Heart right ventricle (tissue), 16 donors: ENCODE measurements at regions of chr3 and their contacts with region 1.

Region 1: GRCh38 chr3:157130467-157131251 is 29.3 kb downstream of the CCNL1 start:
- DNase-seq: peak; percentile 47 to 61
- ATAC-seq: peak; percentile 13 to 53 (median 42)
- H3K4me3 ChIP-seq: peak overlapping the region in 8 of 10 donors; percentile 0 to 49 (median 28)
- H3K27ac ChIP-seq: peak overlapping the region; percentile 65 to 90 (median 83)
- H3K4me1 ChIP-seq: peaks cover 0 to 82% (median 57%) of the 10 kb centered on the region in 9 donors
- H3K27me3 ChIP-seq: no peaks in the 10 kb centered on the region
- CTCF ChIP-seq: peak; percentile 50 to 80 (median 72)

Region 2: GRCh38 chr3:156547637-156548036 is 583.0 kb before region 1 on chr3:
- intact Hi-C with region 1: loop called in 5 of 10 experiments (anchors 5 to 10 kb)
- DNase-seq: no peak
- ATAC-seq: peak in 6 of 8 donors; percentile 57 to 78 (median 65)
- H3K4me3 ChIP-seq: no peak overlapping the region
- H3K27ac ChIP-seq: peak overlapping the region in 9 of 10 donors; percentile 38 to 91 (median 59)
- H3K4me1 ChIP-seq: peaks cover 5 to 99% (median 81%) of the 10 kb centered on the region in 9 donors
- H3K27me3 ChIP-seq: no peaks in the 10 kb centered on the region
- CTCF ChIP-seq: no peak

Region 3: GRCh38 chr3:156674046-156674910 is 456.4 kb before region 1 on chr3 and contains the start of gene TIPARP:
- intact Hi-C with region 1: loop called in 5 of 10 experiments (anchors 5 kb)
- DNase-seq: peak; percentile 99 to 100
- ATAC-seq: peak; percentile 96 to 99 (median 97)
- H3K4me3 ChIP-seq: peak within 1 kb of the TSS; percentile 72 to 98 (median 92)
- H3K27ac ChIP-seq: peak within 1 kb of the TSS; percentile 93 to 98 (median 97)
- H3K4me1 ChIP-seq: peaks cover 0 to 52% (median 35%) of the 10 kb centered on the region in 9 donors
- H3K27me3 ChIP-seq: no peaks in the 10 kb centered on the region
- CTCF ChIP-seq: peak; percentile 50 to 85 (median 72)
- total RNA-seq, gene TIPARP: 19.8 to 74.6 (median 23.9) TPM

Region 4: GRCh38 chr3:156691920-156692319 is 438.7 kb before region 1 on chr3:
- intact Hi-C with region 1: loop called in 1 of 10 experiments (anchors 10 kb)
- DNase-seq: no peak
- ATAC-seq: peak in 2 of 8 donors; percentile 29 to 48
- H3K4me3 ChIP-seq: peak overlapping the region in 3 of 10 donors; percentile 2 to 6 (median 4)
- H3K27ac ChIP-seq: peak overlapping the region in 3 of 10 donors; percentile 17 to 36 (median 33)
- H3K4me1 ChIP-seq: peaks cover 5 to 71% (median 57%) of the 10 kb centered on the region in 9 donors
- H3K27me3 ChIP-seq: no peaks in the 10 kb centered on the region
- CTCF ChIP-seq: no peak

Region 5: GRCh38 chr3:156826144-156826895 is 304.3 kb before region 1 on chr3 and contains the start of gene LEKR1:
- intact Hi-C with region 1: loop called in 6 of 10 experiments (anchors 5 to 10 kb)
- DNase-seq: peak; percentile 89 to 90
- ATAC-seq: peak; percentile 95 to 98 (median 97)
- H3K4me3 ChIP-seq: peak within 1 kb of the TSS; percentile 50 to 80 (median 71)
- H3K27ac ChIP-seq: peak within 1 kb of the TSS; percentile 85 to 95 (median 92)
- H3K4me1 ChIP-seq: peaks cover 0 to 13% (median 8%) of the 10 kb centered on the region in 9 donors
- H3K27me3 ChIP-seq: no peaks in the 10 kb centered on the region
- CTCF ChIP-seq: no peak
- total RNA-seq, gene LEKR1: 0.17 to 3.0 (median 0.92) TPM

Region 6: GRCh38 chr3:157081681-157082210 is 48.9 kb before region 1 on chr3:
- intact Hi-C with region 1: loop called in 4 of 10 experiments (anchors 2 to 5 kb)
- DNase-seq: peak; percentile 88 to 91
- ATAC-seq: peak; percentile 82 to 89 (median 85)
- H3K4me3 ChIP-seq: no peak overlapping the region
- H3K27ac ChIP-seq: peak overlapping the region in 4 of 10 donors; percentile 11 to 36 (median 26)
- H3K4me1 ChIP-seq: peaks cover 0 to 44% (median 22%) of the 10 kb centered on the region in 9 donors
- H3K27me3 ChIP-seq: no peaks in the 10 kb centered on the region
- CTCF ChIP-seq: peak in 8 of 9 donors; percentile 90 to 98 (median 96)

Region 7: DNA sequence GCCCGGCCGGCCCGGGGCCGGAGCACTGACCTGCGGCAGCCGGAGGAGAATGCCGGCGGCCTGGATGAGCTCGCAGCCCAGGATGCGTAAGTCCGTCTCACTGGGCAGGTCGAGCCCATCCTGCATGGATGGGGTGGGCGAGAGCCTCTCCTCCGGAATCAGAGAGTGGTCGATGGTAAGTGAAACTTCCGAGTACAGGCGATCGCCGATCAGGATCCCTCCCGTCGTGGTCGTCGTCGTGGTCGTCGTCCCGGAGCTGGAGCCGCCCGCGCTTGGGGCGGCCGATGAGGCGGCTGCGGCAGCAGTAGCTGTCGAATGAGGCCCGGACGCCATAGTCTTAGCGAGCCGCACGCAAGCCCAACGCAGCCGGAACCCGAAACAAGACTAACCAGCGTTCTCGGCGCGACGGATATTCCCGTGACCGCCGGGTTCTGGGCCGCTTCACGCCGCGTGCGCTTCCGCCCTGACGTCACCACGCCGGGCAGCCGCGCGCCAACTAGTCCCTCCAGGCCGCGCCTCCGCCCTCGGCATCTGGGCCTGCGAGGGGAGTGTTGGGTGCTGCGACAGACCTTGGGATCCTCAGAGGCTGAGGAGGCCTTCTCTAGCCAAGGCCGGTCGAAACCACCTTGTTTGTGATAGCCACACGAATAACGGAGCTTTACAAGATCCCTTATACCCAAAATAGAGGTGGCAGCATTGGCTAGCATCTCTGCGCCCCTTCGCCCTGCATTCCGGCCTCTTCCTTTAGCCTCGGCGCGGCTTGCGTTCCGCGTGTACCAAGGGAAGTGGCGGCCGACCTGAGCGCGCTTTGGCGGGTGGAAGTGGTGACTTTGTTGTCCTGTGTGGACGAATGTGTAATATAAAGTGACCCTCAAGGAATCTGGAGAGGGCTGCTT is 29.4 kb after region 1 on chr3 and contains the start of gene CCNL1:
- intact Hi-C with region 1: no loop called
- DNase-seq: peak; percentile 97
- ATAC-seq: peak; percentile 93 to 97 (median 96)
- H3K4me3 ChIP-seq: peak within 1 kb of the TSS; percentile 87 to 100 (median 96)
- H3K27ac ChIP-seq: peak within 1 kb of the TSS; percentile 97 to 100 (median 100)
- H3K4me1 ChIP-seq: peaks cover 9 to 61% (median 51%) of the 10 kb centered on the region in 9 donors
- H3K27me3 ChIP-seq: no peaks in the 10 kb centered on the region
- CTCF ChIP-seq: no peak
- total RNA-seq, gene CCNL1: 19.1 to 52.5 (median 24.7) TPM

Region 8: DNA sequence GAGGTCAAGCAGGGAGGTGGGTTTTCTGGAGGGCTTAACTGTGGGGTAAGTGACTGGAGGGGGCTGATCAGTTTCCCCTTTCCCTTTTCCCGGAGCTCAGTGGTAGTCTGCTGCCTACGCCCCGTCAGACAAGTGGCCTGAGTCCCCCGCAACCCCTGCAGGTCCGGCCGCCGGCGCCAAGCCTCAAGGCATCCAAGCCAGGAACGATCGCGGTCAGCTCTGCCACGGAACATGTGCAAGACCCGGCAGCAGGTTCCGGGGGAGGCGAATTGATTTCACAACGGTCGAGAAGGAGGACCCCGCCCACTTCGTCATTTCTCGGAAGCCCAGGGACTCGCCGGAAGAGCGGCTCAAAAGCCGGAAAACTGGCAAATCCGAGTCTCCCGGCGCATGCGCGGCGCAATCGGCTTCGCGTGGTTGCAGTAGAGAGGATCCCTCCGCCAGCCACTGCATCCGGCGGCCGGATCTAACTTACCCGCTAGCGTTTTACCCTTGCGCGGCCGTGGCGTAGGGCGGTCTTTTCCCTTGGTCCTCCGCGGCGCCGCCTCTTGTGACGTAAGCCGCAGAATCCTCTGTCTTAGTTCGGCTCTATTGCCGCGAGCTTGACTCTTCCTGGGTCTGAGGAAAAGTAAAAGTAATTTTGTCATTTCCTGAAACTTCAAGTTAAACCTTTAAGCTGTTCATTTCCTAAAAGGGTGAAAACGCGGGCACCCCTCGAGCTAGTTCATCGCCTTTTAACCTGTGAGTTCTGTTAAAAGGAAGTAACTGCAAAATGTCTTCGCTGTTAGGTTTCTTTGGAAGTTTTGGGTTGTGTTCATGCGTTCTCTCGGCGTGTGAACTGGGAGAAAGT is 44.2 kb after region 1 on chr3:
- intact Hi-C with region 1: no loop called
- DNase-seq: peak; percentile 98 to 100
- ATAC-seq: peak; percentile 97 to 99 (median 98)
- H3K4me3 ChIP-seq: peak overlapping the region; percentile 43 to 72 (median 64)
- H3K27ac ChIP-seq: peak overlapping the region; percentile 92 to 98 (median 96)
- H3K4me1 ChIP-seq: peaks cover 5 to 31% (median 22%) of the 10 kb centered on the region in 9 donors
- H3K27me3 ChIP-seq: no peaks in the 10 kb centered on the region
- CTCF ChIP-seq: no peak

Region 9: DNA sequence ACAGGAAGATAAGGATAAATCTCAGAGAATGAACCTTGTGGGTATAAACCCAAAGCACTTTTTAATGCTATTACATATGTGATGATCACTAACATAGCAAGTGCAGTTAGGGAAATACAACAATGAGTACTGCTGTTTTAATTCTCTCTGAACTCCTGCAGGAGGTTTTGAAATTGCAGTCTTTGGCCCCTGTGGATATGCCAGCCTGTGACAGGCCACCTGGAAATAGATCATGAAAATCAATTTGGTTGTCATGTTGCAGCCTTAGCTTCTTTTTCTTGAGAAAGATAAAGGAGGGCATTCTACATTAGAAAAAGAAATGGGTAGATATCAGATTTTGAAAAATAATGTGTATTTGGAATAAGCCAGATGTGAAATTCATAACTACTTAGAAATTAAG is 1082.8 kb after region 1 on chr3:
- intact Hi-C with region 1: no loop called
- DNase-seq: no peak
- ATAC-seq: no peak
- H3K4me3 ChIP-seq: no peak overlapping the region
- H3K27ac ChIP-seq: no peak overlapping the region
- H3K4me1 ChIP-seq: no peaks in the 10 kb centered on the region
- H3K27me3 ChIP-seq: no peaks in the 10 kb centered on the region
- CTCF ChIP-seq: no peak